GM12878 (cell line): ENCODE measurements at regions of chr10 and their contacts with region 1.

Region 1: GRCh38 chr10:96017191-96017687 is 26.1 kb upstream of the CCNJ start:
- DNase-seq: peak; percentile 32
- ATAC-seq: peak; percentile 99
- H3K4me3 ChIP-seq: no peak overlapping the region
- H3K27ac ChIP-seq: no peak overlapping the region
- H3K4me1 ChIP-seq: no peaks in the 10 kb centered on the region
- H3K27me3 ChIP-seq: no peaks in the 10 kb centered on the region
- CTCF ChIP-seq: peak; percentile 75 to 79 (median 77)
- EP300 ChIP-seq: no peak
- POLR2A ChIP-seq: no peak
- RAD21 ChIP-seq: peak; percentile 90

Region 2: DNA sequence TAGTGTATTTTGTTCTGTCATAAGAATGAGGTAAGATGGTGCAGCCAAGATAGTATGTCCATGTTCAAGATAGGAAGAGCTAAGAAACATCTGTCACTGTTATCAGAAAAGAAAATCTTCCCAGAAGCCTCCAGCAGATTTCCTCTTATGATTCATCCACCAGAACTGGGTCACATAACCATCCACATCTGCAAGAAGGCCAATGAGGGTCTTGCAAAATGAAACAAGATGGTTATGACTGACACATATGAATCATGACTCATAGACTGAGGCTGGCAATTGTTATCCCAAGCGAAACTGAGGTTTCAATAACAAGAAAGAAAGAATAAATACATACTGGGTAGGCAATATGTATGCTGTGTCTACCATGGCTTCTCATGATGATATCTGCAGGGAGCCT is 56.5 kb after region 1 on chr10:
- CTCF ChIA-PET with region 1: interaction called, 10 read pairs
- POLR2A ChIA-PET with region 1: no interaction called
- RAD21 ChIA-PET with region 1: no interaction called
- SMC1A ChIA-PET with region 1: interaction called, 3 read pairs
- in situ Hi-C with region 1: no loop called
- intact Hi-C with region 1: no loop called
- DNase-seq: no peak
- ATAC-seq: peak; percentile 52
- H3K4me3 ChIP-seq: no peak overlapping the region
- H3K27ac ChIP-seq: no peak overlapping the region
- H3K4me1 ChIP-seq: no peaks in the 10 kb centered on the region
- H3K27me3 ChIP-seq: no peaks in the 10 kb centered on the region
- CTCF ChIP-seq: no peak
- EP300 ChIP-seq: no peak
- POLR2A ChIP-seq: no peak
- RAD21 ChIP-seq: no peak

Region 3: GRCh38 chr10:96153070-96153469 is 135.8 kb after region 1 on chr10:
- CTCF ChIA-PET with region 1: interaction called, 6 read pairs
- POLR2A ChIA-PET with region 1: no interaction called
- RAD21 ChIA-PET with region 1: no interaction called
- SMC1A ChIA-PET with region 1: no interaction called
- in situ Hi-C with region 1: no loop called
- intact Hi-C with region 1: loop called (anchors 5 kb)
- DNase-seq: no peak
- ATAC-seq: no peak
- H3K4me3 ChIP-seq: no peak overlapping the region
- H3K27ac ChIP-seq: no peak overlapping the region
- H3K4me1 ChIP-seq: no peaks in the 10 kb centered on the region
- H3K27me3 ChIP-seq: no peaks in the 10 kb centered on the region
- CTCF ChIP-seq: no peak
- EP300 ChIP-seq: no peak
- POLR2A ChIP-seq: no peak
- RAD21 ChIP-seq: no peak

Region 4: GRCh38 chr10:96222441-96222840 is 205.2 kb after region 1 on chr10:
- CTCF ChIA-PET with region 1: interaction called, 10 read pairs
- POLR2A ChIA-PET with region 1: no interaction called
- RAD21 ChIA-PET with region 1: interaction called, 4 read pairs
- SMC1A ChIA-PET with region 1: interaction called, 3 read pairs
- in situ Hi-C with region 1: loop called (anchors 5 kb)
- intact Hi-C with region 1: no loop called
- DNase-seq: no peak
- ATAC-seq: no peak
- H3K4me3 ChIP-seq: no peak overlapping the region
- H3K27ac ChIP-seq: no peak overlapping the region
- H3K4me1 ChIP-seq: no peaks in the 10 kb centered on the region
- H3K27me3 ChIP-seq: no peaks in the 10 kb centered on the region
- CTCF ChIP-seq: no peak
- EP300 ChIP-seq: no peak
- POLR2A ChIP-seq: no peak
- RAD21 ChIP-seq: no peak

Region 5: GRCh38 chr10:96244354-96244753 is 227.1 kb after region 1 on chr10:
- CTCF ChIA-PET with region 1: interaction called, 10 read pairs
- POLR2A ChIA-PET with region 1: no interaction called
- RAD21 ChIA-PET with region 1: no interaction called
- SMC1A ChIA-PET with region 1: no interaction called
- in situ Hi-C with region 1: no loop called
- intact Hi-C with region 1: no loop called
- DNase-seq: peak; percentile 89
- ATAC-seq: peak; percentile 98
- H3K4me3 ChIP-seq: 0 out of 2 replicates have a peak overlapping the region, but pooled peaks have one; percentile 18
- H3K27ac ChIP-seq: peak overlapping the region; percentile 67
- H3K4me1 ChIP-seq: peaks cover 24% of the 10 kb centered on the region
- H3K27me3 ChIP-seq: no peaks in the 10 kb centered on the region
- CTCF ChIP-seq: no peak
- EP300 ChIP-seq: peak; percentile 41 to 56; a peak in 3 of 4 replicates
- POLR2A ChIP-seq: peak; percentile 46
- RAD21 ChIP-seq: peak; percentile 3; the same call in 1 of the 2 replicates

Region 6: GRCh38 chr10:96325719-96326373 is 308.6 kb after region 1 on chr10:
- CTCF ChIA-PET with region 1: interaction called, 8 read pairs
- POLR2A ChIA-PET with region 1: no interaction called
- RAD21 ChIA-PET with region 1: interaction called, 6 read pairs
- SMC1A ChIA-PET with region 1: interaction called, 10 read pairs
- in situ Hi-C with region 1: loop called (anchors 10 kb)
- intact Hi-C with region 1: no loop called
- DNase-seq: peak; percentile 23
- ATAC-seq: peak; percentile 98
- H3K4me3 ChIP-seq: no peak overlapping the region
- H3K27ac ChIP-seq: peak overlapping the region; percentile 42; the same call in 1 of the 2 replicates
- H3K4me1 ChIP-seq: peaks cover 16% of the 10 kb centered on the region
- H3K27me3 ChIP-seq: no peaks in the 10 kb centered on the region; a peak in 1 of 4 replicates
- CTCF ChIP-seq: no peak
- EP300 ChIP-seq: peak in 1 of 2 experiments; percentile 55; a peak in 2 of 4 replicates
- POLR2A ChIP-seq: no peak
- RAD21 ChIP-seq: no peak